ENCODE measurements at regions of chr5 and their contacts with region 1.

Region 1: DNA sequence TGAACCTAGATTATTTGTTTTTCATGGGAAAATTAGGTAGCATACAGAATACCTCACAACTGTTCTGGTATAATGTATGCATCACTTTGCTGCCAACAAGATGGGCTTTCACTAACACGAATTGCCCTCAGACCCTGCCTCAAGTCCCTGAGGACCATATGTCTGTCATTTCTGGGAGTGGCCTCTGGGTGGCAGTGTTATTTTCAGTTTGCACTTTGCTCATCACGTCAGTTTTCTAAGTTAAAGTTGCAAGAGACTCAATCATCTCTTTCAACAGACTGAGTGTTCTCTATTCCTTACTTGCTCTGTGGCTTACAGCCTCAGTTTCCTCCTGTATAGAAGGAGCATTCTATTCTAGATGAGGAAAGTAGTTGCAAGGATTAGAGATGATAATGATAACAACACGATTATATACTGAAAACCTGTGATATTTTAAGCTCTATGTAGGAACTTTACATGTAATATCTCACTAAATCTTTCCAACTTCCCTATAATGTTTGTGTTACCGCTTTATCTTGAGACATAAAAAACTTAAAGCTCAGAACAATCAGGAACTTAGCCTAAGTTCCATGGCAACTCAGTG is 55.7 kb downstream of the TSSK1B start:
- DNase-seq: peak; percentile 77
- ATAC-seq: peak; percentile 63
- H3K4me3 ChIP-seq: no peak overlapping the region
- H3K27ac ChIP-seq: no peak overlapping the region
- H3K4me1 ChIP-seq: peaks cover 6% of the 10 kb centered on the region
- H3K27me3 ChIP-seq: no peaks in the 10 kb centered on the region
- CTCF ChIP-seq: peak; percentile 91

Region 2: GRCh38 chr5:113119246-113119924 is 259.7 kb before region 1 on chr5:
- CTCF ChIA-PET with region 1: no interaction called
- POLR2A ChIA-PET with region 1: no interaction called
- intact Hi-C with region 1: no loop called
- DNase-seq: no peak
- ATAC-seq: no peak
- H3K4me3 ChIP-seq: no peak overlapping the region
- H3K27ac ChIP-seq: no peak overlapping the region
- H3K4me1 ChIP-seq: peaks cover 15% of the 10 kb centered on the region
- H3K27me3 ChIP-seq: no peaks in the 10 kb centered on the region
- CTCF ChIP-seq: no peak

Region 3: DNA sequence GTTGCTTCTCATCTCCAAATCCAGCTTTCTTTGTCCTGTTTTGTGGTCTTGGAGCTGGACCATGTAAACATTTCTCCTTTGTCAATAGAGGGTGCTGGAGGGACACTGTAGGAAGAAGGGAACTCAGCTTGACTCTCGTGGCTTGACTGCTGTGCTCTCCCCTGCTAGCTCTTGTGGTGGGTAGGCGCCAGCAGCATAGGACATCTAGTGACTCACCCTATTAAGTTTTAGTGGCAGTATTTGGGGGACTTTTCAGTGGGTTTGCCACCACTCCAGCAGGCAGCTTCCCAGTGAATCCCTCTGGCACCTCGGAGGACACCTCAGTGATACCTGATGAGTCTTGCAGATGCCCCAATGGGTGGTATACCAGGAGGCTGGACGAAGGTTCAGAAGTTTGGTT is 42.1 kb before region 1 on chr5:
- CTCF ChIA-PET with region 1: no interaction called
- POLR2A ChIA-PET with region 1: no interaction called
- intact Hi-C with region 1: loop called (anchors 2 kb)
- DNase-seq: peak; percentile 72
- ATAC-seq: peak; percentile 91
- H3K4me3 ChIP-seq: no peak overlapping the region
- H3K27ac ChIP-seq: no peak overlapping the region
- H3K4me1 ChIP-seq: no peaks in the 10 kb centered on the region
- H3K27me3 ChIP-seq: no peaks in the 10 kb centered on the region
- CTCF ChIP-seq: peak; percentile 78

Region 4: DNA sequence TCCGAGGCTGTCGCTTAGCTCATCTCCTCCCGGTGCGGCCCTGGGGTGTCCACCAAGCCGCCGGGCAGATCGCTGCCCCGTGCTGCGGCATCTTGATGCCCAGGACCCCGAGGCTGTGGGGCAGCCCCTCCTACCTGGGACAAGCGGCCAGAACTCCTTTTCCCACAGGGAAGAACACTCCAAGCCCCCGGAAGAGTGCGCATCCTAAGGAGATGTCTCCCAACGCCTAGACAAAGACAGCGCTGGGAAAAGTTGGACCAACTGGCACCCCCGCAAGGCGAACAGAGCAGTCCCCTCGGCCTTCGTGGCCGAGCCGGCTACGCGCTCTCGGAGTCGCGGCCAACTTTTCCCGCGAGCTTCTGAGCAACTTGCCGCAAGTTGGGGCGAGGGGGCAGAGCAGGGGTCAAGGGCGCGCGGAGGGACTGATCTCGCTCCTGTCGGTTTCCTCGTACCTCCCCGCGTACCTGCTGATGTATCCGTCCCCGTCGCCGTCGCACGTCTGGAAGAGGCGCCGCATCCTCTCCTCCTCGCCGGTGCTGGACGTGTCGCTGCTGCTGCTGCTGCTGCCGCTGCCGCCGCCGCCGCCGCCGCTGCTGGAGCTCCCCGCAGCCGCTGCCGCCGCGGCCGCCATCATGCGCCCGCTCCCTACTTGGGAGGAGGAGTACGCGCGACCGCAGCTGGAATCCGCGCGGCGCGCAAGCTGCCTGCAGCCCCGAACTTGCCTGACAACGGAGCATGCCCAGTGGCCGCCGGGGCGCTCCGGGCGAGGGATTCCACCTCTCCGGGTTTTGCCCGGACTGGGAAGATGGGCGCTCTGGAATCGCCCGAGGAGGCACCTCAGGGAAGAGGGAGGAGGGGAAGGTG is 109.0 kb after region 1 on chr5 and contains the start of gene MCC:
- CTCF ChIA-PET with region 1: no interaction called
- POLR2A ChIA-PET with region 1: no interaction called
- intact Hi-C with region 1: loop called (anchors 1 kb)
- DNase-seq: peak; percentile 76
- ATAC-seq: peak; percentile 62
- H3K4me3 ChIP-seq: peak within 1 kb of the TSS; percentile 87
- H3K27ac ChIP-seq: no peak within 1 kb of the TSS
- H3K4me1 ChIP-seq: peaks cover 13% of the 10 kb centered on the region
- H3K27me3 ChIP-seq: peaks cover 16% of the 10 kb centered on the region; the same call in 1 of the 2 replicates
- CTCF ChIP-seq: no peak
- total RNA-seq, gene MCC: 7.1 and 10.3 TPM in 2 replicates

Region 5: DNA sequence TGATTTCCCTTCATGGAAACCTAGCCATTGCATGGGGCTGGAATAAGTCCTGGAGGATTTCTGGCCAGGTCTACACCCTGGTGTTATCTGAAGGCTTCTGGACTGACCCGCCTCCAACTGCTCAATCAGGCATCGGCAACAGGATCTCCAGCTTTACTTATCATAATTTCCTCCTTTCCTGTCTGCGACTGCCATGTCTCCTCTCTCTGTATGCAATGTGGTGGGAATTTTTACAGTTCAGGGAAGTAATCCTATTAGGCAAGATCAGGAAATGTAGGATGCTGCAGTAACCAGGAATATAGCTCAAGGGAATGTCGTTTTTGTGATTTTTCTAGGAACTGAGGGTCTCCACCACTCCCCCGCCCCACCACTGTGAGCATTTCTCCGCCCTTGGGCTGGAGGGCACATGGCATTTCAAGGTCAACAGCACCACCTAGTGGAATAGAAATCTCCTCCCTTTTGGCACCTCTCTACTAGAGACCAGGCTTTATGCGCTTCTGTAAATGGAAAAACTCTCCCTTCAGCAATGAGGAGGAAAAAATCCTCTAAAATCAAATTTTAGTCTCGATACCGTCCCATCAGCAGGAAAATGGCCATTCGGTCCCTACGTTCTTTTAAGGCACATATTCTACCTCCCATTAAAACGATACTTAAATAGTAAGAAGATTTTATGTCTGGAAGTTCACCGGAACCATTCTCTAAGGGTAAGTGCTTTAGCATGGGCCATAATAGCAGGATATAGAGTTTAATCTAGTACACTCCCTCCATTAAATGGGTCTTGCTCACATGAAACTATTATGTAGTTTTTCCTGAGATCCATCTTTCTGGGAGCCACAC is 227.5 kb after region 1 on chr5:
- CTCF ChIA-PET with region 1: no interaction called
- POLR2A ChIA-PET with region 1: no interaction called
- intact Hi-C with region 1: loop called (anchors 1 kb)
- DNase-seq: peak; percentile 78
- ATAC-seq: peak; percentile 95
- H3K4me3 ChIP-seq: 0 out of 2 replicates have a peak overlapping the region, but pooled peaks have one; percentile 38
- H3K27ac ChIP-seq: no peak overlapping the region
- H3K4me1 ChIP-seq: peaks cover 9% of the 10 kb centered on the region
- H3K27me3 ChIP-seq: no peaks in the 10 kb centered on the region
- CTCF ChIP-seq: peak; percentile 94